Activated naive CD4-positive, alpha-beta T cell treated with anti-CD3 and anti-CD28 coated beads for 36 hours (primary cell): ENCODE measurements at regions of chr5 and their contacts with region 1.

Region 1: DNA sequence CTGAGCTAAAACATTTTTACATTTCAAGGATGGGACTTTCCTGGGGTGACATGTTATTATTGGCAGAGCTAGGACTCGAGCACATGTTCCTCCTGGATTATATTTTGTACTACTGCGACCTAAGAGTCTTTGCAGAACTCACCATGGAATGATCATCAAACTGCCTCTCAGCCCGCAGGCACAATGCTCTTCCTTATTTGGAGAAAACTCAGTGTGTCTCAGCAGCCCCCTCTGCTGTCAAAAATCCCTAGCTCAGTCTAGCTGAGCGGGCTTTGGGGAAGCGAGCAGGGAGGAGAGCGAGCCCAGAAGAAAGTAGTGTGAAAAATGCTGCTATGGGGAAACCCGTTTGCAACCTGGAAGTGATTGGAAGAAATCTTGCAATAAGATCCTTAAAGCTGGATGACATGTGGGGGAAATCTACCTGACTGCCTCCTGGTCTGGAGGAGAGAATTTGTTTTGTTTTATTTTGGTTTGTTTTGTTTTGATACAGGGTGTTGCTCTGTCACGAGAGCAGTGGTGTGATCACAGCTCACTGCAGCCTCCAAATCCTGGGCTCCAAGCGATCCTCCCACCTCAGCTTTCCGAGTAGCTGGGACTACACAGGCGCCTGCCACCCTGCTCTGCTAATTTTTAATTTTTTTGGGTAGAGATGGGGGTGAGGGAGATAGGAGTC is 89.9 kb upstream of the CLINT1 start:
- DNase-seq: peak; percentile 91
- H3K4me3 Mint-ChIP-seq: no peak overlapping the region
- H3K27ac Mint-ChIP-seq: no peak overlapping the region
- H3K4me1 Mint-ChIP-seq: peaks cover 4% of the 10 kb centered on the region
- H3K27me3 Mint-ChIP-seq: peaks cover 4% of the 10 kb centered on the region

Region 2: GRCh38 chr5:156920042-156920860 is 1028.6 kb before region 1 on chr5:
- CTCF ChIA-PET with region 1: no interaction called
- intact Hi-C with region 1: no loop called
- DNase-seq: peak; percentile 89
- H3K4me3 Mint-ChIP-seq: peak overlapping the region; percentile 55
- H3K27ac Mint-ChIP-seq: peak overlapping the region; percentile 93
- H3K4me1 Mint-ChIP-seq: peaks cover 70% of the 10 kb centered on the region
- H3K27me3 Mint-ChIP-seq: no peaks in the 10 kb centered on the region

Region 3: DNA sequence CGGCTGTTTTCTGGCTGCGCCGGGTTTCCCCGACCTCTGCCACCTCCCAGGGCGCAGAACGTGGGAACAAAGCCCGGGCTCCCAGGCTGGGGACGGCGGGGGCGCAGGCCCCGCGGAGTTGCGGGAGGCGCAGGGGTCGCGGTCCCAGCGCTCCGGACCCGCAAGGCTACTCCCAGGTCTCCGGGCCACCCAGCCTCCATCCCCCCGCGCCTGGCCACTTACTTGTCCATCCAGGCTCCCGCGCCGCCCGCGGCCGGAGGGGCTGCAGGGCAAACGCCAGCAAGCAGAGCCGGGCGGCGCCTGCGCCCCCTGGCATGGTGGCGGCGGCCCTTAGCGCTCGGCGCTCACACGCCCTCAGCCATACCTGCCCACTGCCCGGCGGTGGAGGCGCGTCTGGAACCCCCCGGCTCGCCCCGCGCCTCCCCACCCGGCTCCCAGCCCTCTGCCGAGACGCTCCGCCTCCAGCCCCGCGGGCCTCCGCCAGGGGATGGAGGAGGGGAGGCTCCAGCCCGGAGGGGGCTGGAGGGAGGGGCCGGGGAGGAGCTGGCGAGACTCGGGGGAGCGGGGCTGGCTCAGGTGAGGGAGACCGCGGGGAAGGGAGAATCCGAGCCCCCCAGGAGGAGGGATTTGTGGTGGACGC is 373.4 kb before region 1 on chr5 and contains the start of gene ADAM19:
- CTCF ChIA-PET with region 1: no interaction called
- intact Hi-C with region 1: no loop called
- DNase-seq: peak; percentile 31
- H3K4me3 Mint-ChIP-seq: peak within 1 kb of the TSS; percentile 89
- H3K27ac Mint-ChIP-seq: peak within 1 kb of the TSS; percentile 74
- H3K4me1 Mint-ChIP-seq: peaks cover 42% of the 10 kb centered on the region
- H3K27me3 Mint-ChIP-seq: peaks cover 13% of the 10 kb centered on the region
- total RNA-seq, gene ADAM19: 37.3 to 39.3 TPM

Region 4: DNA sequence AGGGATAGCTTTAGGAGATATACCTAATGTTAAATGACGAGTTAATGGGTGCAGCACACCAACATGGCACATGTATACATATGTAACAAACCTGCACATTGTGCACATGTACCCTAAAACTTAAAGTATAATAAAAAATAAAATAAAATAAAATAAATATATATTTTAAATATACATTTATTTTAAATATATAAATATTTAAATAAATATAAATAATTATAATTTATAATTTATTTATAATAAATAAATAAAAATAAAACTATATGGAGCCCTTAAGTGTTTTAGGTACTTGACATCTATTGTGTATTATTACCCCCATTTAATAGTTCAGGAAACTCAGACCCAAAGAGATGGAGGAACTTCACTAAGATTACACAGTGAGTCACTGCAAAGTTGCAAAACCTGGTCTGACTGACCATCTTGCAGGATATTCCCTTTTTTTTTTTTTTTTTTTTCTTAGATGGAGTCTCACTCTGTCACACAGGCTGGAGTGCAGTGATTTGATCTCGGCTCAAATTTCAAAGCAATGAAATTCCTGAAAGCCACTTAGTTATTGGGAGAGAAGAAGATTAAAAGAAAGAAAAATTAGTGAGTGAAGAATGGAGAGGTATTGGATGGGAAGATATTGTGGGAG is 283.3 kb before region 1 on chr5:
- CTCF ChIA-PET with region 1: no interaction called
- intact Hi-C with region 1: loop called (anchors 5 kb)
- DNase-seq: no peak
- H3K4me3 Mint-ChIP-seq: no peak overlapping the region
- H3K27ac Mint-ChIP-seq: no peak overlapping the region
- H3K4me1 Mint-ChIP-seq: peaks cover 8% of the 10 kb centered on the region
- H3K27me3 Mint-ChIP-seq: peaks cover 17% of the 10 kb centered on the region

Region 5: DNA sequence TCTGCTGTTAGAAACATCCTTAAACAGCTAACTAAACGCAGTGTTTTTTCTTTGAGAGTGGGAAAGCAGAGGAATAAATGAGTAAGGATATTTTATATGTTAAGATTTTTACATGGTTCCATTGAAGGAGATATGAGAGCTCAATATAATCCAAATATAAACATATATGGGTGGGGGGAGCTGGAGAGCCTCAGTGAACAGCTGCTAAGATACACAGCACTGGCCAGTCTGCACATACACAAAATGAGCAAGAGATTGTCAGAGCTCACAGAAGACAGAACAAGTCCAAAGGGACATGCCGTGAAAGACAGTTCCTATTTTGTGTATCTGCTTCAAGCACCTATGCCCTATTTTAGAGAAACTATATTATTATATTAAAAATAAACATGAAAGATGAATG is 136.8 kb before region 1 on chr5:
- CTCF ChIA-PET with region 1: interaction called, 75 read pairs
- intact Hi-C with region 1: loop called (anchors 1 kb)
- DNase-seq: no peak
- H3K4me3 Mint-ChIP-seq: no peak overlapping the region
- H3K27ac Mint-ChIP-seq: no peak overlapping the region
- H3K4me1 Mint-ChIP-seq: no peaks in the 10 kb centered on the region
- H3K27me3 Mint-ChIP-seq: no peaks in the 10 kb centered on the region

Region 6: DNA sequence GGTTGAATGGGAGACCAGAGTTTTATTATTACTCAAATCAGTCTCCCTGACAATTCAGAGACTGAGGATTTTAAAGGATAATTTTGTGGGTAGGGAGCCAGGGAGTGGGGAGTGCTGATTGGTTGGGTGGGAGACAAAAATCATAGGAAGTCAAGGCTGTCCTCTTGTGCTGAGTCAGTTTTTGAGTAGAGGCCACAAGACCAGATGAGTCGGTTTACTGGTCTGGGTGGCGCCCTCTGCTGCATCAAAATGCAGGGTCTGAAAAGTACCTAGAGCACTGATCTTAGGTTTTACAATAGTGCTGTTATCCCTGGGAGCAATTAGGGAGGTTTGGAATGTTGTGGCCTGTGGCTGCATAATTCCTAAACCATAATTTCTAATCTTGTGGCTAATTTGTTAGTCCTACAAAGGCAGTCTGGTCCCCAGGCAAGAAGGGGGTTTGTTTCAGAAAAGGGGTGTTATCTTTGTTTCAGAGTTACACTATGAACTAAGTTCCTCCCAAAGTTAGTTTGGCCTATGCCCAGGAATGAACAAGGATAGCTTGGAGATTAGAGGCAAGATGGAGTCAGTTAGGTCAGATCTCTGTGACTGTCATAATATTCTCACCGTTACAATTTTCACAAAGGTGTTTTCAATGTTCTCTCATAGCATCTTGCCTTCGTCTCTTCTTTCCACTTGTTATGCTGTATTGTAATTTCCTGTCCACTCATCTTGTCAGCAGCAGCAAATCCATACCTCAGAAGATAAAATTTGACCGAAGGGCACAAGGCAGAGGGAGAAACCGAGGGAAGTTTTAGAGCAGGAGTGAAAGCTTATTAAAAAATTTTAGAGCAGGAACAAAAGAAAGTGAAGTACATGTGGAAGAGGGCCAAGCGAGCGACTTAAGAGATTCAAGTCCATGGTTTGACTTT is 30.7 kb before region 1 on chr5:
- CTCF ChIA-PET with region 1: interaction called, 10 read pairs
- intact Hi-C with region 1: loop called (anchors 1 kb)
- DNase-seq: peak; percentile 88
- H3K4me3 Mint-ChIP-seq: no peak overlapping the region
- H3K27ac Mint-ChIP-seq: no peak overlapping the region
- H3K4me1 Mint-ChIP-seq: peaks cover 22% of the 10 kb centered on the region
- H3K27me3 Mint-ChIP-seq: no peaks in the 10 kb centered on the region

Region 7: DNA sequence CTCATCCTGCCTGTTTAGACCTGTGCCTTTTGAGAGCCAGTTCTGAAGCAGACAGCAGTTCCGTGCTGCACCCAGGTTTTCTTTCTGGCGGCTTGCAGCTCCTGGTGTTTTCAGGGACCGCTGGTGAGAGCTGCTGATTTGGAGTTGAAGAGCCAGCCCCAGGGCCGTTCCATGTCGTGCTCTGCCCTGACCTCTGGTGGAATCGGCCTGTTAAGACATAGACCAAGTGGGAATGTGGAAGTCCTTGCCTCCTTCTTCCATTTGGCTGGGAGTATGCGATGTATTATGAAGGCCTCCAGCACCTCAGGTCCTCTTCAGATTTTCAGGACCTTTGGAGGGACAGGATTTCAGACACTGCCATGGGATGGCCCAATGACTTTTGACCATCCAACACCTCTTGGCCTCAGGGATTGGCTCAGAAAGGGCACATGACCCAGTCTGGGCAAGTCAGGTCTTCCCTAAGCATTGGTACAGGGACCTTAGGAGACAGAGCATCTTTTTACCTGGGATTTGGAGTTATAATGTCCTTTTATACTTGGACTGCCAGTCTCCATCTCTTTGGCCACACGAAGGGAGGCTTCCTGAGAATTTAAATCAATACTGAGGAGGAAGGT is 46.1 kb after region 1 on chr5:
- CTCF ChIA-PET with region 1: interaction called, 15 read pairs
- intact Hi-C with region 1: no loop called
- DNase-seq: peak; percentile 64
- H3K4me3 Mint-ChIP-seq: no peak overlapping the region
- H3K27ac Mint-ChIP-seq: no peak overlapping the region
- H3K4me1 Mint-ChIP-seq: peaks cover 11% of the 10 kb centered on the region
- H3K27me3 Mint-ChIP-seq: peaks cover 22% of the 10 kb centered on the region